Caco-2 (cell line): ENCODE measurements at regions of chr13 and their contacts with region 1.

Region 1: DNA sequence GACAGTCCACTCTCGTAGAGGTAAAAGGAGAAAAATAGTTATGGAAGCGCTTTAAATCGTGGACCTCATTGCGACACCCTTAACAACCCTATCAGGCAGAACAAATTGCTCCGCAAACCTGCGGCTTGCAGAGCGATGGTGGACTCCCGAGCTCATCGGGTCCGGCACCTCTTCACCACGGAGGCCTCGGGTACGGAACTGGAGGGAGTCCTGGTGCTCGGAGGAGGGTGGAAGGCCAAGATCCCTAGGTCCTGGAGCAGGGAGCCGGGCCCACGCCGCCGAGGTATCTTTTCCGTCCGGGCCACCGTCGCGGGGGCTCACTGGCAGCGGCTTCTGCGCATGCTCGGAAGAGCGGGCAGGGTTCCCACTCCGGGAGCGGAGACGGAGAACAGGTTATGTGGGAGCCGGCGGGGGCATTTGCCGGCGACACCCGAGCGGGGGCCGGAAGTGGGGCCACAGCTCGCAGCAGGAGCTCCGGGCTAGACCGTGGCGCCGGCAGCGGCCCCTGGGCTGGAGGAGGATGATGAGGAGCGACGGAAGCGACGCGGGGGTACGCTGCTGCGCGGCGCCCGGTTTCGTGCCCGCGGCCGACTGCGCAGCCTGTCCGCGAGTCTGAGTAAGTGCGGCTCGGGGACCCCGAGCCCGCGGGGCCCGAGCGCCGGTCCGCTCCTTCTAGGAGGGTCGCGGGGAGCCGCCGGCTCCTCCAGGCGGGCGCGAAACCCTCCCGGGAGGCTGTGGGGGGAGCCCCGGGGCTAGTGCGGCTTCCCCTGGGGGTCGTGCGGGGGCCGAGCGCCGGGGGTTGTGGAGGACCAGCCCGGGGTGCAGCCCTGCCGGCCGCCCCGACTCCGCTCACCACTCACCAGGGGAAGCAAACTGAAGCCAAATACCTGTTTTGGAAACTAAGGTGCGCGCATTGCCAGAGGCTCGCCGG is at the start of gene ABHD13:
- DNase-seq: peak; percentile 93 to 95
- H3K4me3 ChIP-seq: peak within 1 kb of the TSS; percentile 97
- H3K4me3 Mint-ChIP-seq: peak within 1 kb of the TSS; percentile 83
- H3K27ac Mint-ChIP-seq: peak within 1 kb of the TSS; percentile 86
- H3K4me1 ChIP-seq: peaks cover 15% of the 10 kb centered on the region
- H3K4me1 Mint-ChIP-seq: peaks cover 7% of the 10 kb centered on the region
- H3K27me3 ChIP-seq: no peaks in the 10 kb centered on the region
- H3K27me3 Mint-ChIP-seq: no peaks in the 10 kb centered on the region
- CTCF ChIP-seq: peak in 1 of 2 experiments; percentile 1
- total RNA-seq, gene ABHD13: 9.5 and 9.9 TPM in 2 replicates

Region 2: GRCh38 chr13:108176685-108177274 is 41.5 kb before region 1 on chr13:
- CTCF ChIA-PET with region 1: no interaction called
- POLR2A ChIA-PET with region 1: no interaction called
- intact Hi-C with region 1: loop called (anchors 1 kb)
- DNase-seq: peak in 1 of 2 experiments; percentile 44
- H3K4me3 ChIP-seq: no peak overlapping the region
- H3K4me3 Mint-ChIP-seq: no peak overlapping the region
- H3K27ac Mint-ChIP-seq: no peak overlapping the region
- H3K4me1 ChIP-seq: no peaks in the 10 kb centered on the region
- H3K4me1 Mint-ChIP-seq: no peaks in the 10 kb centered on the region
- H3K27me3 ChIP-seq: no peaks in the 10 kb centered on the region
- H3K27me3 Mint-ChIP-seq: no peaks in the 10 kb centered on the region
- CTCF ChIP-seq: peak; percentile 24 to 52

Region 3: GRCh38 chr13:108269601-108270328 is 51.5 kb after region 1 on chr13 and contains the start of gene TNFSF13B:
- CTCF ChIA-PET with region 1: no interaction called
- POLR2A ChIA-PET with region 1: no interaction called
- intact Hi-C with region 1: no loop called
- DNase-seq: peak in 1 of 2 experiments; percentile 16
- H3K4me3 ChIP-seq: no peak within 1 kb of the TSS
- H3K4me3 Mint-ChIP-seq: no peak within 1 kb of the TSS
- H3K27ac Mint-ChIP-seq: no peak within 1 kb of the TSS
- H3K4me1 ChIP-seq: no peaks in the 10 kb centered on the region
- H3K4me1 Mint-ChIP-seq: no peaks in the 10 kb centered on the region
- H3K27me3 ChIP-seq: no peaks in the 10 kb centered on the region
- H3K27me3 Mint-ChIP-seq: no peaks in the 10 kb centered on the region
- CTCF ChIP-seq: no peak
- total RNA-seq, gene TNFSF13B: 0.41 and 0.84 TPM in 2 replicates

Region 4: GRCh38 chr13:109135018-109135417 is 916.7 kb after region 1 on chr13:
- CTCF ChIA-PET with region 1: no interaction called
- POLR2A ChIA-PET with region 1: no interaction called
- intact Hi-C with region 1: no loop called
- DNase-seq: peak in 1 of 2 experiments; percentile 26
- H3K4me3 ChIP-seq: no peak overlapping the region
- H3K4me3 Mint-ChIP-seq: no peak overlapping the region
- H3K27ac Mint-ChIP-seq: no peak overlapping the region
- H3K4me1 ChIP-seq: peaks cover 6% of the 10 kb centered on the region; the same call in 1 of the 2 replicates
- H3K4me1 Mint-ChIP-seq: peaks cover 3% of the 10 kb centered on the region
- H3K27me3 ChIP-seq: no peaks in the 10 kb centered on the region
- H3K27me3 Mint-ChIP-seq: no peaks in the 10 kb centered on the region
- CTCF ChIP-seq: peak; percentile 27 to 55